CD4-positive, alpha-beta T cell (primary cell): ENCODE measurements at regions of chr19 and their contacts with region 1.

Region 1: DNA sequence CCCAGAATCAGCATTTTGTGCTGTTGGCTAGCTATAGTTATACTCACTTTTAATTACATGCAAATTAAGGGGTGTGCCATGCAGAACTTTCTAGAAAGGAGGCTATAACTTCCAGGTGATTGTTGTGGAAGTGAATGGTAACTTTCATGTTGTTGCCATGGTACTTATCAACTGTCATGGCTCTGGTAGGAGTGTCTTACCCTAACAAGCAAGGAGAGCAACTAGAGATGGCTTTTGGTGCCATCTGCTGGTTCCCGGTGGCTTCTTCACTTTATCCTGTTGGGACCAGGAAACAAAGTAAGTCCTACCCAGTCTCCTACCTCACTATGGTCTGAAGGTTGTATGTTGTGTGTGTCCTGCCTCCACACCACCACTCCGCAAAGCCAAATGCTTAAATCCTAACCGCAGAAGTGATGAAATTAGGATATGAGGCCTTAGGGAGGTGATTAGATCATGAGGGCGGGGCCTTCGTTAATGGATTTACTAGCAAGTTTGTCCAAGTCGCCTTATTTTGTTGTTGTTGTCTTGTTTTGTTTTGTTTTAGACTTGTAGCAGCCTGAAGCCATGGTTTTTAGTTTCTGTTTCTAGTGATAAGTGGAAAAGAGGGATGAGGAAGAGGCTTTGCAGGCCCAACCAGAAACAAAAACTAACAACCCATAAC is 22.6 kb downstream of the FBXL12 start:
- DNase-seq: peak; percentile 72 to 95 (median 82)
- ATAC-seq: peak; percentile 32
- H3K4me3 ChIP-seq: no peak overlapping the region
- H3K4me3 Mint-ChIP-seq: peak overlapping the region; percentile 81
- H3K27ac ChIP-seq: peak overlapping the region; percentile 56 to 71
- H3K27ac Mint-ChIP-seq: peak overlapping the region; percentile 90
- H3K4me1 ChIP-seq: peaks cover 28% of the 10 kb centered on the region
- H3K4me1 Mint-ChIP-seq: peaks cover 34% of the 10 kb centered on the region
- H3K27me3 ChIP-seq: no peaks in the 10 kb centered on the region
- H3K27me3 Mint-ChIP-seq: no peaks in the 10 kb centered on the region
- CTCF ChIP-seq: peak; percentile 82

Region 2: GRCh38 chr19:8412783-8413628 is 1383.2 kb before region 1 on chr19 and contains the start of gene MARCHF2:
- CTCF ChIA-PET with region 1: no interaction called
- POLR2A ChIA-PET with region 1: no interaction called
- intact Hi-C with region 1: no loop called
- DNase-seq: peak; percentile 91 to 99 (median 96)
- ATAC-seq: peak; percentile 99
- H3K4me3 ChIP-seq: peak within 1 kb of the TSS; percentile 62
- H3K4me3 Mint-ChIP-seq: peak within 1 kb of the TSS; percentile 81
- H3K27ac ChIP-seq: no peak within 1 kb of the TSS
- H3K27ac Mint-ChIP-seq: no peak within 1 kb of the TSS
- H3K4me1 ChIP-seq: peaks cover 15% of the 10 kb centered on the region
- H3K4me1 Mint-ChIP-seq: peaks cover 13% of the 10 kb centered on the region
- H3K27me3 ChIP-seq: no peaks in the 10 kb centered on the region
- H3K27me3 Mint-ChIP-seq: no peaks in the 10 kb centered on the region
- CTCF ChIP-seq: peak; percentile 75
- total RNA-seq, gene MARCHF2: 20.0 to 22.2 TPM

Region 3: GRCh38 chr19:8832132-8833021 is 963.9 kb before region 1 on chr19 and contains the starts of genes MBD3L1 and ZNF558:
- CTCF ChIA-PET with region 1: no interaction called
- POLR2A ChIA-PET with region 1: no interaction called
- intact Hi-C with region 1: loop called in 1 of 2 experiments (anchors 10 kb)
- DNase-seq: peak; percentile 95 to 100 (median 99)
- ATAC-seq: peak; percentile 88
- H3K4me3 ChIP-seq: peak within 1 kb of the TSS; percentile 90
- H3K4me3 Mint-ChIP-seq: peak within 1 kb of the TSS; percentile 97
- H3K27ac ChIP-seq: peak within 1 kb of the TSS; percentile 89 to 92
- H3K27ac Mint-ChIP-seq: peak within 1 kb of the TSS; percentile 95
- H3K4me1 ChIP-seq: peaks cover 15% of the 10 kb centered on the region
- H3K4me1 Mint-ChIP-seq: peaks cover 31% of the 10 kb centered on the region
- H3K27me3 ChIP-seq: no peaks in the 10 kb centered on the region
- H3K27me3 Mint-ChIP-seq: no peaks in the 10 kb centered on the region
- CTCF ChIP-seq: peak; percentile 48
- total RNA-seq, gene MBD3L1: not detected
- total RNA-seq, gene ZNF558: 22.2 to 23.3 TPM

Region 4: DNA sequence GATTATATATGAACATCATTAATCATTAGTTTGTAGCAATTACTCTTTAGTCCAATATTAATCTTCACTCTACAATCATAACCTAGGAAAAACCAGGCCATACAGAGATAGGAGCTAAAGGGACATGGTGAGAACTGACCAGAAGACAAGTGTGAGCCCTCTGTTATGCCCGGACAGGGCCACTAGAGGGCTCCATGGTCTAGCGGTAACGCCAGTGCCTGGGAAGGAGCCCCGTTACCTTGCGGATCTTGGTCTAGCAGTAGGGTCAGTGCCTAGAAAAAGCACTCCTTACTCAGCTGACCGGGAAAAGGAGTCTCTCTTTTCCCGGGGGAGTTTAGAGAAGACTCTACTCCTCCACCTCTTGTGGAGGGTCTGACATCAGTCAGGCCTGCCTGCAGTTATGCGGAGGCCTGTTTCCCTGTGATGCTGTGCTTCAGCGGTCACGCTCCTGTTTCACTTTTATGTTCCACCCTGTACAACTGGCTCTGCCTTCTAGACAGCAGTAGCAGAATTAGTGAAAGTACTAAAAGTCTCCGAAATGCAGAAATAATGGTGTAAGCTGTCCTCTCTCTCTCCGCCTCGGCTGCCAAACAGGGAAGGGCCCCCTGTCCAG is 590.6 kb before region 1 on chr19:
- CTCF ChIA-PET with region 1: interaction called, 3 read pairs
- POLR2A ChIA-PET with region 1: no interaction called
- intact Hi-C with region 1: loop called (anchors 1 kb)
- DNase-seq: peak; percentile 40 to 78 (median 58)
- ATAC-seq: peak; percentile 58
- H3K4me3 ChIP-seq: peak overlapping the region; percentile 20
- H3K4me3 Mint-ChIP-seq: peak overlapping the region; percentile 56
- H3K27ac ChIP-seq: no peak overlapping the region
- H3K27ac Mint-ChIP-seq: no peak overlapping the region
- H3K4me1 ChIP-seq: peaks cover 3% of the 10 kb centered on the region
- H3K4me1 Mint-ChIP-seq: no peaks in the 10 kb centered on the region
- H3K27me3 ChIP-seq: no peaks in the 10 kb centered on the region
- H3K27me3 Mint-ChIP-seq: peaks cover 8% of the 10 kb centered on the region
- CTCF ChIP-seq: peak; percentile 96

Region 5: DNA sequence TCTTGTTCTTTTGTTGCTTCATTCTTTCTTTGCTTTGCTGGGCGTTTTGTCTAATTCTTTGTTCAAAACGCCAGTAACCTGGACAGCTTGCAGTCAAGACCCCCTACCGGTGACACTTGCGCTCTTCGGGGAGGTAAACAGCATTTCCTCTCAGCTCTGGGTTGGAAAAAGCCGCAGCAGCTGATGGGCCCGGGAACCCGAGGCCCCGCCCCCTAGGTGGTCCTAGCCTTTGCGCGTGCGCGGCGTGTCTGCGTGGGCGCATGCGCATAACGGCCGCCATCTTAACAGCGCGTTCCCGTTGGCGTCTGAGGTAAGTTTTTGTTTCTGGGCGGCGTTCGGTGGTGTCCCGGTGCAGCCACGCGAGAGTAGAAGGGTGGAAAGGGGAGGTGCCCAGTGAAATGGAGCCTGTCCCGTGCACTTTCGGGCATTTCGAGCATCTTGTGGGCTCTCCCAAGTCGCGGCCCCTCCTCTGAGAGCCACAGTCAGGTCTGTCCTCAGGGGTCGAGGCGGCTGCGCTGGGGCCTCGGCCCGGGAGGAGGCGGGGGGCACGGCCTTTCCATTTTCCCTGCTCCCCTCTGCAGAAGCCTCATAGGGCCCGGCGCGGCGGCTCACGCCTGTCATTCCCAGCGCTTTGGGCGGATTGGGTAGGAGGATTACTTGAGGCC is 472.2 kb before region 1 on chr19 and contains the start of gene ZNF559:
- CTCF ChIA-PET with region 1: interaction called, 3 read pairs
- POLR2A ChIA-PET with region 1: no interaction called
- intact Hi-C with region 1: loop called in 1 of 2 experiments (anchors 10 kb)
- DNase-seq: peak; percentile 94 to 98 (median 97)
- ATAC-seq: peak; percentile 97
- H3K4me3 ChIP-seq: peak within 1 kb of the TSS; percentile 87
- H3K4me3 Mint-ChIP-seq: peak within 1 kb of the TSS; percentile 96
- H3K27ac ChIP-seq: peak within 1 kb of the TSS; percentile 80 to 83
- H3K27ac Mint-ChIP-seq: peak within 1 kb of the TSS; percentile 90
- H3K4me1 ChIP-seq: peaks cover 25% of the 10 kb centered on the region
- H3K4me1 Mint-ChIP-seq: peaks cover 33% of the 10 kb centered on the region
- H3K27me3 ChIP-seq: no peaks in the 10 kb centered on the region
- H3K27me3 Mint-ChIP-seq: no peaks in the 10 kb centered on the region
- CTCF ChIP-seq: peak; percentile 65
- total RNA-seq, gene ZNF559: 4.7 to 6.5 TPM

Region 6: GRCh38 chr19:9538183-9539058 is 257.8 kb before region 1 on chr19 and contains the start of gene ZNF426:
- CTCF ChIA-PET with region 1: no interaction called
- POLR2A ChIA-PET with region 1: no interaction called
- intact Hi-C with region 1: loop called in 1 of 2 experiments (anchors 1 kb)
- DNase-seq: peak; percentile 62 to 91 (median 80)
- ATAC-seq: peak; percentile 94
- H3K4me3 ChIP-seq: peak within 1 kb of the TSS; percentile 78
- H3K4me3 Mint-ChIP-seq: peak within 1 kb of the TSS; percentile 95
- H3K27ac ChIP-seq: peak within 1 kb of the TSS; percentile 64 to 84
- H3K27ac Mint-ChIP-seq: peak within 1 kb of the TSS; percentile 98
- H3K4me1 ChIP-seq: peaks cover 16% of the 10 kb centered on the region
- H3K4me1 Mint-ChIP-seq: peaks cover 32% of the 10 kb centered on the region
- H3K27me3 ChIP-seq: no peaks in the 10 kb centered on the region
- H3K27me3 Mint-ChIP-seq: no peaks in the 10 kb centered on the region
- CTCF ChIP-seq: no peak
- total RNA-seq, gene ZNF426: 14.9 to 15.3 TPM

Region 7: DNA sequence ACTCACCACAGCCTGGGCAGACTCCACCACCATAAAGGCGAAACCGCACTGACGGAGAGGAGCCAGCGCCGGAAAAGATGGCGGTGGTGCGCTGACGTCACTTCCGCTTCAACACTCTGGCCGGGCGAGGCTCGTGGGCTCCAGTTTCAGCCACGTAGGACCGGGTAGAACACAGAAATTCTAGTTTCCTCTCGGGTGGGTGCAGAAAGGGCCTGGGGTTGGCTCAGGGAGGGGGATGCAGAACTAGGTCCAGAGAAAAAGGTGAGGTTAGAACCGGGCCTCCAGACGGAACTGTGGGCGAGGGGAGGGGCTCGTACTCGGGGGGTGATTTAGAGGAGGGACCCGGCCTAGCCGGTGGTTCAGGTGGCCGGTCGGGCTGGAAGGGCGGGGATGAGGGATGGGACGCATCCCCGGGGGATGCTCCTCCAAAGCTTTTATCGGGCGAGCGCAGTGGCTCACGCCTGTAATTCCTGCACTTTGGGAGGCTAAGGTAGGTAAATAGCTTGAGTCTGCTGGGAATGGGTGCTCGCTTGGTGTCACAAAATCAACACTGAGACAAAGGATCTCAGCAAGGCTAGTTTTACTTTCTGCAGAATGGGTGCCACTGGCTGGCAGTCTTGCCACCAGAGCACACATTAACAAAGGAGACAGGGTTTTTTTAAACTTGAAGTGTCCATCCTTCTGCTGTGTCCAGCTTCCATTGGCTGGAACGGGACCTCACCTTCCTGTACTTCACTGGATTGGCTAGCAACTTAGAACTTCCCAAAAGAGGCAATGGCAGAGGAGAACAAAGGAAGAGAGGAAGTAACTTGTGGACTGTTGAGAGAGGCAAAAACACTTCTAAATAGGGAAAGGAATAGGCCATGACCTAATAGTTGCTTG is 174.8 kb before region 1 on chr19 and contains the start of gene ZNF561:
- CTCF ChIA-PET with region 1: interaction called, 11 read pairs
- POLR2A ChIA-PET with region 1: interaction called, 6 read pairs
- intact Hi-C with region 1: loop called (anchors 1 kb)
- DNase-seq: peak; percentile 81 to 96 (median 85)
- ATAC-seq: peak; percentile 90
- H3K4me3 ChIP-seq: peak within 1 kb of the TSS; percentile 77
- H3K4me3 Mint-ChIP-seq: peak within 1 kb of the TSS; percentile 97
- H3K27ac ChIP-seq: peak within 1 kb of the TSS; percentile 93 to 94
- H3K27ac Mint-ChIP-seq: peak within 1 kb of the TSS; percentile 99
- H3K4me1 ChIP-seq: peaks cover 20% of the 10 kb centered on the region
- H3K4me1 Mint-ChIP-seq: peaks cover 25% of the 10 kb centered on the region
- H3K27me3 ChIP-seq: no peaks in the 10 kb centered on the region
- H3K27me3 Mint-ChIP-seq: peaks cover 4% of the 10 kb centered on the region
- CTCF ChIP-seq: no peak
- total RNA-seq, gene ZNF561: 45.1 to 46.2 TPM

Region 8: DNA sequence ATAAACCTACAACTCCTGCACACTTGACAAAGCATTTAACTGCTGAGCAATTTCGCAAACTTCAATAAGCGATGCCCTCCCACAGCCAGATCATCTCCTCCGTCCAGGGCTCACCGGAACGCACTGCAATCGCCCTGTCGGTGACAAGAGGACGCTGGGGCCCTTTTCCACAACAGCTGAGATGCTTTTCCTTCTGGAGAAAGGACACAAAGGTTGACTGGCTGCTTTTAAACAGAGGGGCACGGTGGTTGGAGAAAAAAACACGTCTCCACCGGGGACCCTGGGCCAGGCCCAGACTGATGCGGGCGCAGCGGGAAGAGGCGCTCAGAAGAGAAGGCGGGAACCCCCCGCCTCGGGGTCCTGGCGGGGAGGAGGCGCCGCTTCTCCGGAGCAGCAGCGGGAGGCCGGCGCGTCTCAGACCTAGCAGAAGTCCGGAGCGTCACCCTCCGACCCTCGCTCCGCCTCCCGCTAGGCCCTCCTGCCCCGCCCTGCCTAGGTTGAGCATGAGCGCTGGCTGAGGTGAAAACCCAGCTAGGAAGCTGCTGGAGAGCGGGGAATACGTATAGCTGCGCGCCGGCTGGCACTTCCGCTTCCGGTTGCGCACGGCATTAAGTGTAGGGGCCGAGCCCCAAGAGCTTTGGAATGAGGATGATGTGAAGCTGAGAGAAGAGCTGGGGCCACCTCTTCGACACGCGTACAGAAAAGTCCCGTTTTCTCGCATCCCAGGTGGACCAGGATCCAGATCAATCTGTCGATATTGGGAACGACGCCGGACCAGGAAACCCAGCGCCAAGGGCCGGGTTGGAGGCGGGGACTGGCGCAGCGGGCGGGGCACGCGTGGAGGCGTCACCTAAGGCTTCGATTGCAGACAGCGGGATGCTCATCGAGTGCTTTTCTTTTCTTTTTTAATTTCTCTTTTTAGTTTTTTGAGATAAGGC is 27.8 kb before region 1 on chr19 and contains the start of gene ZNF846:
- CTCF ChIA-PET with region 1: interaction called, 5 read pairs
- POLR2A ChIA-PET with region 1: interaction called, 11 read pairs
- intact Hi-C with region 1: loop called in 1 of 2 experiments (anchors 1 kb)
- DNase-seq: peak; percentile 88 to 96 (median 90)
- ATAC-seq: peak; percentile 96
- H3K4me3 ChIP-seq: peak within 1 kb of the TSS; percentile 69
- H3K4me3 Mint-ChIP-seq: peak within 1 kb of the TSS; percentile 94
- H3K27ac ChIP-seq: peak within 1 kb of the TSS; percentile 93 to 94
- H3K27ac Mint-ChIP-seq: peak within 1 kb of the TSS; percentile 97
- H3K4me1 ChIP-seq: peaks cover 23% of the 10 kb centered on the region
- H3K4me1 Mint-ChIP-seq: peaks cover 12% of the 10 kb centered on the region
- H3K27me3 ChIP-seq: no peaks in the 10 kb centered on the region
- H3K27me3 Mint-ChIP-seq: no peaks in the 10 kb centered on the region
- CTCF ChIP-seq: no peak
- total RNA-seq, gene ZNF846: 7.9 to 8.5 TPM